Esophagus muscularis mucosa (tissue), 4 donors: ENCODE measurements at regions of chr7 and their contacts with region 1.

Region 1: DNA sequence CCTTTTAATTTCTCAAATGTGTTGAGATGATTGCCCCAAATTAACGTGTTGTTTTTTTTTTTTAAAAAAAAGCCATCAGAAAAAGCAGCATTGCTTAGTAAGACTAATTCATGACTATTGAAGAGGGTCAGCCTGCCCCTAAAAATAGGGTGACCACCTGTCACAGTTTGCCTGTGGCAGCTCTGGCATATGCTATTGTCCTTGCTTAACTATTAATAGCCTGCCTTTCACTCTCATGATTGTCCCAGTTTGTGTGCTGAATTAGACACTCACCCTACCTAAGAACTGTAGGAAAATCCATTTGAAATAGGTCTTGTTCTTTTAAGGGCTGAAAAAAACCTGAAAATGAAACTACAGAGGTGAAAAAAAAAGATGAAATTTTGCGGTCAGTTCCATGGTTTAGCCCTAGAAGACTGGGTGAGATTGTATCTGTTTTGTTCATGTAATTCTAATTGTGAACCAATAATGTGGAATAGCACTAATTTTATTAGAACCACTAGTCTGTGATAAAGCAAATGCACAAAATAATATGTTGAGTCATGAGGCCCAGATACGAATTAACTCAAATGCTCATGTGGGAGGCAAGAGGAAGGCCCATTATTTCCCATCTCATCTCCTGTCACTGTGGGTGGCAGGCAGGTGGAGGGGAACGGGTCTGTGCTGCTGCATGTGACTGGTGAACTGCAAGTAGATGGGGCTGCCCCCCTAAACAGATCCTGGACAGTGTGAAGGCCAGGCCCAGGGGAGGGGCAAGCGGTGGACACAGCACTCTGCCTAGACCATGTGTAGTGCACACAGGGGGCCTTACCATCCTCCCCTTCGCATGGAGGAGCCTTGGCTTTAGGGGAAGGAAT is 265.4 kb upstream of the NFE2L3 start:
- DNase-seq: no peak
- H3K4me3 ChIP-seq: no peak overlapping the region
- H3K27ac ChIP-seq: no peak overlapping the region
- H3K4me1 ChIP-seq: no peaks in the 10 kb centered on the region
- H3K27me3 ChIP-seq: peaks cover 0 to 80% (median 4%) of the 10 kb centered on the region in 4 donors
- CTCF ChIP-seq: no peak
- EP300 ChIP-seq: no peak
- POLR2A ChIP-seq: no peak

Region 2: DNA sequence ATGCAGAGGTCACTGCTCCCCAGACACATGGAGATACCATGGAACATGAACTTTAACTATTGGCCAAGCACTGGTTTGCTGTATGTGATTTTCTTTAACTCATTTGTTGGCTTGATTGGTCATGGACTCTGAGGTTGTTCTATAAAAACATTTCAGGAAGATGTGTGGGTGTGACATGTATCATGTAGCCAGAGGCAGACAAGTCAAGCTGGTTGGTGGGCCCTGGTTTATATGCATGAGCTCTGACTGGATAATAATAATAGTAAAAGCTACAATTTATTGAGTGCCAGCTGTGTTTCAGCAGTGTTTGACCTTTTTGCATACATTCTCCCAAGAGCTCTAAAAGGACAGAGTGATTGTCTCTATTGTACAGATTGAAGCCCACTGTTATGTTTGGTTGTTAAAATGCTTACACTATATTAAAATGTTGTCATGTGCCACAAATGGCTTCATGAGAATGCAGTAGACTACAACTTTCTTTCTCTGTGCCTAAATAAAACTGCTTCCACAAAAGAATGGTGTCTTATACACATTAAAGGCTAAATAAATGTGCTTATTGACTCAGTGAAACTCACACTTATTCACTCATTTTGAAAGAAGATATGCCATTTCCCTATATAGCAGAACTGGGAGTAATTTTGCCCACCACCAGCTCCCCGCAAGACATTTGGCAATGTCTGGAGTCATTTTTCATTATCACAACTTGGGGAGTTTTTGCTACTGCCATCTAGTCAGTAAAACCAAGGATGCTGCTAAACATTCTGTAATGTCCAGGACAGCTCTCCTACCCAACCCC is 21.7 kb after region 1 on chr7:
- intact Hi-C with region 1: no loop called
- DNase-seq: peak; percentile 50
- H3K4me3 ChIP-seq: no peak overlapping the region
- H3K27ac ChIP-seq: no peak overlapping the region
- H3K4me1 ChIP-seq: no peaks in the 10 kb centered on the region
- H3K27me3 ChIP-seq: peaks cover 0 to 18% (median 0%) of the 10 kb centered on the region in 4 donors
- CTCF ChIP-seq: no peak
- EP300 ChIP-seq: no peak
- POLR2A ChIP-seq: no peak

Region 3: DNA sequence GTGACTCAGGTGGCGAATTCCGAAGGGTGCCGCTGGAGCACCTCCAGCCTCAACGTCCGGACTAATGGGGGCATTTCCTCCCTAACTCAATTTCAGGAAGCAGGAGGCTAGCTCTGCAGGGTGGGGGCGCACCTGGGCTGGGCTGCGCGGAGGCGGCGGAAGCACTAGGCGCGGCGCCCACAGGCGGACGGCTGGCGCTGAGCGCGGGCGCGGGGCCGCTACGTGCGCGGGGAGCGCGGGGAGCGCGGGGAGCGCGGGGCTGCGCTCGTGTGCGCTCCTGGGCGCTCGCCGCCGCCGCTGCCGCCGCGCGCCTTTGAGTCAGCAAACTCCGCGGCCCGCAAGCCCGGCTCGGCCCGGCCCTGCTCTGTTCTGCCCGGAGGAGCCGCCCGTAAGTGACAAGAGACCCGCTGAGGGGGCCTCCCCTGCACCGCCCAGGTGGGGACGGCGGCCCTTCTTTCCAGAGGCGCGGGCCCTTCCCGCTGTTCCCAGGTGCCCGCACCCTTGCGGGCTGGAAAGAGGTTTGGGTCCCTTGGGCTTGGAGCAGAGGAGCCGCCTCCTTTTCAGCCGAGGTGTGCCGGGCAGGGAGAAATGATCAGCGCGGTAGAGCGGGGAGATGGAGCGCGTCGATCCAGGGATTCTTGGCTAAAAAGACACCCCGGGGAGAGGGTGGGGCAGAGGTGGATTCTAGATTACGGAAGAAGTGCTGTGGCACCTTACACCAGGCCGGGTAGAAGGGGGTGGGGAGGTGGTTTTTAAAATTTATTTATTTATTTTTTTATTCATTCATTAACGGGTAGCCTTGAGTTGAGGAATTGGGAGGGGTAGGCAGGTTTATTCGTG is 405.3 kb after region 1 on chr7 and contains the start of gene SNX10:
- intact Hi-C with region 1: no loop called
- DNase-seq: no peak
- H3K4me3 ChIP-seq: peak within 1 kb of the TSS; percentile 56 to 61 (median 58)
- H3K27ac ChIP-seq: no peak within 1 kb of the TSS
- H3K4me1 ChIP-seq: peaks cover 6 to 16% (median 10%) of the 10 kb centered on the region in 4 donors
- H3K27me3 ChIP-seq: peaks cover 0 to 21% (median 0%) of the 10 kb centered on the region in 4 donors
- CTCF ChIP-seq: no peak
- EP300 ChIP-seq: no peak
- POLR2A ChIP-seq: no peak
- total RNA-seq, gene SNX10: 1.9 to 5.0 (median 4.1) TPM

Region 4: GRCh38 chr7:26675143-26675887 is 788.7 kb after region 1 on chr7:
- intact Hi-C with region 1: loop called (anchors 10 kb)
- DNase-seq: no peak
- H3K4me3 ChIP-seq: no peak overlapping the region
- H3K27ac ChIP-seq: no peak overlapping the region
- H3K4me1 ChIP-seq: peaks cover 0 to 1% (median 0%) of the 10 kb centered on the region in 4 donors
- H3K27me3 ChIP-seq: no peaks in the 10 kb centered on the region
- CTCF ChIP-seq: no peak
- EP300 ChIP-seq: no peak
- POLR2A ChIP-seq: no peak